A549 (cell line): ENCODE measurements at regions of chr1 and their contacts with region 1.

Region 1: GRCh38 chr1:40951943-40952743 is 27.4 kb upstream of the CTPS1 start:
- DNase-seq: peak; percentile 53 to 67
- ATAC-seq: peak; percentile 77 to 80; a peak in 5 of 6 replicates
- H3K4me3 ChIP-seq: no peak overlapping the region
- H3K27ac ChIP-seq: peak overlapping the region; percentile 77 to 87
- H3K4me1 ChIP-seq: peaks cover 34% of the 10 kb centered on the region
- CTCF ChIP-seq: peak; percentile 87
- EP300 ChIP-seq: no peak
- POLR2A ChIP-seq: no peak
- RAD21 ChIP-seq: peak; percentile 95 to 98

Region 2: GRCh38 chr1:40833979-40834378 is 118.2 kb before region 1 on chr1:
- CTCF ChIA-PET with region 1: interaction called, 11 read pairs
- POLR2A ChIA-PET with region 1: no interaction called
- DNase-seq: no peak
- ATAC-seq: no peak
- H3K4me3 ChIP-seq: no peak overlapping the region
- H3K27ac ChIP-seq: no peak overlapping the region
- H3K4me1 ChIP-seq: no peaks in the 10 kb centered on the region
- CTCF ChIP-seq: no peak
- EP300 ChIP-seq: no peak
- POLR2A ChIP-seq: no peak
- RAD21 ChIP-seq: no peak

Region 3: DNA sequence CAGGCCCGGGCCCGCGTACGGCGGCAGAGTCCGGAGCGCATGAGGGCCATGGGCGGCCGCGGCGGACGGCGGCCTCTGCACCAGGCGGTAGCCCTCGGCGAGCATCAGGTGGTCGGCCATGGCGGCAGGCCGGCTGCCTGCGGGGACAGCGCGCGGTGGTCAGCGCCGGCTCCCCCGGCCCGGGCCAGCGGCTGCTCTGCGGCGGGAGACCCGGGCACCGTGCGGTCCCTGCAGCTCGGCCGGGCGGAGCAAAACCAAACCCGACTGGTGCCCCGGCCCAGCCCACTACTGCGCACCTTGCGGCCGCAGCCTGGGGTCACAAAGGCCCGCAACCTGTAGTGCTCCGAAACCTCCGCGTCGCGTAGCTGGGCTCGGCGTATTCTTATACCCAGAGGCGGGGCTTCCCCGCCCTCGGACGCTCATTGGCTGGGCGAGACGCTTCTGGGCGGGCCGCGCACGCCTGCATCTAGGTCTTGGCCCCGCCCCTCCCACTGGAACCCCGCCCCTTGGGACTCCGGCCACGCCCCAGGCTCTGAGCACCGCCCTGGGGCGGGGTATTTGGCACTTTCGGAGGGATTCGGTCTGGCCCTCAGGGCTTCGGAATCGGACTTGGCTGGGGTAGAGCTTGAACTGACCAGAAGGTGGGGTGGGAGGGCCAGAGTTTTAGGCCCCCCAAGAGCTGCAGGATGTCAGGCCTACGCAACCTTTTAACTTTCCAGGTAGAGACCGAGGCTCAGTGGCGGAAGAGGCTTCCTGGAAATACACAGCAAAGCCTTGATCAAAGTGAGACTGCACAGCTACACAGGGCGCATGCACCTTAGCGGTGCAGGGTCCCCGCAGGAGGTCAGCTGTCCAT is 89.9 kb before region 1 on chr1 and contains the start of gene CITED4:
- CTCF ChIA-PET with region 1: interaction called, 602 read pairs
- POLR2A ChIA-PET with region 1: interaction called, 128 read pairs
- DNase-seq: peak; percentile 76 to 95
- ATAC-seq: peak; percentile 82 to 88
- H3K4me3 ChIP-seq: peak within 1 kb of the TSS; percentile 78
- H3K27ac ChIP-seq: peak within 1 kb of the TSS; percentile 87 to 95
- H3K4me1 ChIP-seq: peaks cover 48% of the 10 kb centered on the region
- CTCF ChIP-seq: peak; percentile 52
- EP300 ChIP-seq: no peak
- POLR2A ChIP-seq: peak; percentile 94
- RAD21 ChIP-seq: peak; percentile 82 to 92
- polyA plus RNA-seq, gene CITED4: 5.8 and 7.1 TPM in 2 replicates

Region 4: GRCh38 chr1:40906781-40907400 is 45.3 kb before region 1 on chr1:
- CTCF ChIA-PET with region 1: interaction called, 12 read pairs
- POLR2A ChIA-PET with region 1: no interaction called
- DNase-seq: no peak
- ATAC-seq: no peak
- H3K4me3 ChIP-seq: no peak overlapping the region
- H3K27ac ChIP-seq: peak overlapping the region; percentile 49 to 78; a peak in 5 of 6 replicates
- H3K4me1 ChIP-seq: peaks cover 22% of the 10 kb centered on the region
- CTCF ChIP-seq: no peak
- EP300 ChIP-seq: no peak
- POLR2A ChIP-seq: no peak
- RAD21 ChIP-seq: no peak

Region 5: DNA sequence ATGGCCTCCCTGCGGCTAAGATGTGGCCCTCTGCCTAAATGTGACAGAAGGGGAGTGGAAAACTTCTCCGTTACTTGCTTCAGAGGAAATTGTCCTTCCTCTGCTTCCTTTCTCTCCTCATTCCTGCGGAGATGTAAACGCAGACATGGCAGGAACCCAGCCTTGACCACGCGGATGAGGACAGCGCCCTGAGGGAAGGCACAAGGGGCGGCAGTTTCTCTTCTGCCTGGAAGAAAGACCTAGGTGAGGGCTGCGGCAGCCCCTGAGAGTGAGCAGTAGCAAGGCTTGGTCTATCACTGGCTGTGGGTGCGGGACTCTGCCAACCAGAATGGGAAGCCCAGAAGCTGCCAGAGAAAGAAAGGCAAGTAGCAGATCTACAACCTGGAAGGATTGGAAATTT is 13.4 kb after region 1 on chr1:
- CTCF ChIA-PET with region 1: interaction called, 117 read pairs
- POLR2A ChIA-PET with region 1: no interaction called
- DNase-seq: no peak
- ATAC-seq: no peak
- H3K4me3 ChIP-seq: no peak overlapping the region
- H3K27ac ChIP-seq: peak overlapping the region; percentile 99 to 100
- H3K4me1 ChIP-seq: peaks cover 32% of the 10 kb centered on the region
- CTCF ChIP-seq: no peak
- EP300 ChIP-seq: no peak
- POLR2A ChIP-seq: no peak
- RAD21 ChIP-seq: no peak

Region 6: GRCh38 chr1:40989066-40989465 is 36.9 kb after region 1 on chr1:
- CTCF ChIA-PET with region 1: no interaction called
- POLR2A ChIA-PET with region 1: no interaction called
- DNase-seq: no peak
- ATAC-seq: no peak
- H3K4me3 ChIP-seq: no peak overlapping the region
- H3K27ac ChIP-seq: peak overlapping the region in 1 of 2 experiments; percentile 52; a peak in 2 of 6 replicates
- H3K4me1 ChIP-seq: peaks cover 76% of the 10 kb centered on the region
- CTCF ChIP-seq: no peak
- EP300 ChIP-seq: no peak
- POLR2A ChIP-seq: no peak
- RAD21 ChIP-seq: no peak